ENCODE measurements at regions of chr11 and their contacts with region 1.

Region 1: DNA sequence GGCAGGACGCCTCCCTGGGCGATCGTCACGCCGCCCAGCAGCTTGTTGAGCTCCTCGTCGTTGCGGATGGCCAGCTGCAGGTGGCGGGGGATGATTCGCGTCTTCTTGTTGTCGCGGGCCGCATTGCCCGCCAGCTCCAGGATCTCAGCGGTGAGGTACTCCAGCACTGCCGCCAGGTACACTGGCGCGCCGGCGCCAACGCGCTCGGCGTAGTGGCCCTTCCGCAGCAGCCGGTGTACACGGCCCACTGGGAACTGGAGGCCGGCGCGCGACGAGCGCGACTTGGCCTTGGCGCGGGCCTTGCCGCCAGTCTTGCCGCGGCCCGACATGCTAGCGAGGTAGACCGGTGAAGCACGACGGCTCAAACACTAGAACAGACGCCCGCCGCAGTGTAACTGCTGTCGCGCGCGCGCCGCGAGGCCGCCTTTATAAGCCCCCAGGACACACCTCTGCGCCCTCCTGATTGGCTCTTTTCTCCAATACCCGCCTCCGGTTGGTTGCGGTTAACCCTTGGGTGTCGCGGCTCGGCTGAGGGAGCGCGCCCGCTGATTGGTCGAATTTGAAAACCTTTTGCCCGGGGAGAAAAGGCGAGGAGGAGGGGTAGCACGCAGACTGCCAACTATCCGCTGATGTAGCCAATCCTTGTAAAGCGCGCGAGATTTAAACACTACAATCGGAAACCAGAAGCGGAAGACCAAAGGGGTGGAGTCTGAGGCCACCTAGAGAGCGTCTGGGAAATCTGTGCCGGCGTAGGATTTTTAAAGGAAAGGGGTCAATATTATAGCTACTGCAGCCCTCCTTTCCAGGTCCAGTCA is 6.4 kb downstream of the DPAGT1 start:
- DNase-seq: peak; percentile 96 to 100 (median 100)
- ATAC-seq: peak; percentile 93
- H3K4me3 ChIP-seq: peak overlapping the region; percentile 94
- H3K4me3 Mint-ChIP-seq: peak overlapping the region; percentile 90 to 97 (median 93)
- H3K27ac ChIP-seq: peak overlapping the region; percentile 75
- H3K27ac Mint-ChIP-seq: peak overlapping the region; percentile 82 to 96 (median 88)
- H3K4me1 ChIP-seq: peaks cover 11 to 23% of the 10 kb centered on the region in 2 donors
- H3K4me1 Mint-ChIP-seq: peaks cover 20 to 67% (median 37%) of the 10 kb centered on the region in 7 donors
- H3K27me3 ChIP-seq: no peaks in the 10 kb centered on the region
- H3K27me3 Mint-ChIP-seq: peaks cover 0 to 3% (median 0%) of the 10 kb centered on the region in 5 donors

Region 2: DNA sequence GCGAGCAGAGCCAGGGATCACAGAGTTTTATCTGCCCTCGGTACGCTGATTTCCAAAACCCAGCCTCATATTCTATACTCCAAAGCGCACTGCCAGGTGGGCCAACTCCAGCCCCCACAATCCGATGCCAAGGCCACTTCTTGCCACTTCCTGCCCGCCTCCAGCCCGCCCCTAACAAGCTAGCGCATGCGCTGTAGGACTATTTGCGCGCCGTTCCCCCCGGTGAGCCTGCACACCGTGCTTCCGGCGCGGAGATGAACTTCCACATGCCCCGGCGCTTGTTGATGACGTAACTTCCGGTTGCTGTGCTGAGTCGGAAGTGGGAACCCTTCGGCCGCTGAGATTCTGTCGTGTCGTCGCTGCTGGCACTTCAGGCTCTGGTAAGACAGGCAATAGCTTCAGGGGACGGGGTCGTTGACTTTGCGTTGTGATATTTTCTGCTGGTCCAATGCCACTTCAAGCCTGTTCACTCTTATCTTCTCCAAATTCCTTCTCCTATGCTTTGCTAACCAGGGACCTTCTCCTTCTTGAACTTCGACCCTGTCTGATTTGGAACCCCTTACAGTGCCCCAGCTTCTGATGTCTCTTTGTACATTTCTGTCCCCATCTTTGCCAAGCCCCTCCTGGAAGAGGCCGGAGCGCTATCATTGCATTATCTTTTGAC is 735.8 kb before region 1 on chr11 and contains the start of gene UBE4A:
- CTCF ChIA-PET with region 1: no interaction called
- POLR2A ChIA-PET with region 1: no interaction called
- intact Hi-C with region 1: loop called in 1 of 2 experiments (anchors 2 kb)
- DNase-seq: peak; percentile 89 to 96 (median 95)
- ATAC-seq: peak; percentile 96
- H3K4me3 ChIP-seq: peak within 1 kb of the TSS; percentile 87
- H3K4me3 Mint-ChIP-seq: peak within 1 kb of the TSS; percentile 92 to 99 (median 96)
- H3K27ac ChIP-seq: peak within 1 kb of the TSS; percentile 93
- H3K27ac Mint-ChIP-seq: peak within 1 kb of the TSS; percentile 96 to 100 (median 98)
- H3K4me1 ChIP-seq: peaks cover 18 to 27% of the 10 kb centered on the region in 2 donors
- H3K4me1 Mint-ChIP-seq: peaks cover 30 to 61% (median 51%) of the 10 kb centered on the region in 7 donors
- H3K27me3 ChIP-seq: no peaks in the 10 kb centered on the region
- H3K27me3 Mint-ChIP-seq: peaks cover 0 to 6% (median 0%) of the 10 kb centered on the region in 5 donors
- total RNA-seq, gene UBE4A: 38.4 to 54.5 (median 46.9) TPM

Region 3: DNA sequence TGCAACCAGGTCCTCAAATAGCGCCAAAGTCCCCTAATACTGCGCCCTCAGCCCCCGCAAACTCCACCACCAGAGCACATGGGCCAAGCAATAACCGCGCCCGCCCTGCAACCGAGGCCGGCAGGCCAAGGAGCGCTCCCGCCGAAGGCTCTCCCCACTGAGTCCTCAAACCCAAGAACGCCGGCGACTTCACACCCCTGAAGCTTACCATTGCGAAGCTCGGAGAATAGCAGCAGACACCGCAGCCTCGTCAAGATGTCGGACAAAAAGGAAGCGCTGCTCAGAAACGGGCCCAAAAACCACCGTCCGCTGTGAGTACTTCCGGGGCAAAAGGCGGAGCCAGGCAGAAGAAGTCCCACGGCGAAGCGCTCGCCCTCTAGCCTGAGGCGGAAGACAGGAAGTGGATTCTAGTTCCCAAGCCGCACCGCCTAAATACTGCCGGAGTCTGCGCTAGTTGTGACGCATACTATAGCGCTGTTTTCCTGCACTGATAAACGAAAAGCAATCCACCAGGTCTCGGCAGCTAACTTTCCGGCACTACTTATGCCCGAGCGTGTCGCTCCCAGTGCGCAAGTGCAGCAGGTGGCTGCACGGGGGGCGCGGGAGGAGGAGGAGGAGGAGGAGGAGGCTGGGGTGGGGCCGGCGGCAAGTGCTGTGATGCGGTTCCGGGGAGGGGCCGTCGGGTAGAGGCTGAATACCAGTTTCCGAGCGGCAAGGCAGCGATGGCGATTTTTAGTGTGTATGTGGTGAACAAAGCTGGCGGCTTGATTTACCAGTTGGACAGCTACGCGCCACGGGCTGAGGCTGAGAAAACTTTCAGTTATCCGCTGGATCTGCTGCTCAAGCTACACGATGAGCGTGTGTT is 77.0 kb before region 1 on chr11 and contains the starts of genes RPS25 and TRAPPC4:
- CTCF ChIA-PET with region 1: no interaction called
- POLR2A ChIA-PET with region 1: interaction called, 14 read pairs
- intact Hi-C with region 1: loop called (anchors 1 to 2 kb)
- DNase-seq: peak; percentile 87 to 98 (median 96)
- ATAC-seq: peak; percentile 93
- H3K4me3 ChIP-seq: peak within 1 kb of the TSS; percentile 89
- H3K4me3 Mint-ChIP-seq: peak within 1 kb of the TSS; percentile 96 to 100 (median 98)
- H3K27ac ChIP-seq: peak within 1 kb of the TSS; percentile 98
- H3K27ac Mint-ChIP-seq: peak within 1 kb of the TSS; percentile 99 to 100 (median 100)
- H3K4me1 ChIP-seq: peaks cover 30 to 32% of the 10 kb centered on the region in 2 donors
- H3K4me1 Mint-ChIP-seq: peaks cover 21 to 75% (median 50%) of the 10 kb centered on the region in 7 donors
- H3K27me3 ChIP-seq: no peaks in the 10 kb centered on the region
- H3K27me3 Mint-ChIP-seq: no peaks in the 10 kb centered on the region
- total RNA-seq, gene RPS25: 1,535 to 3,042 (median 2,772) TPM
- total RNA-seq, gene TRAPPC4: 70.7 to 80.3 (median 77.8) TPM

Region 4: DNA sequence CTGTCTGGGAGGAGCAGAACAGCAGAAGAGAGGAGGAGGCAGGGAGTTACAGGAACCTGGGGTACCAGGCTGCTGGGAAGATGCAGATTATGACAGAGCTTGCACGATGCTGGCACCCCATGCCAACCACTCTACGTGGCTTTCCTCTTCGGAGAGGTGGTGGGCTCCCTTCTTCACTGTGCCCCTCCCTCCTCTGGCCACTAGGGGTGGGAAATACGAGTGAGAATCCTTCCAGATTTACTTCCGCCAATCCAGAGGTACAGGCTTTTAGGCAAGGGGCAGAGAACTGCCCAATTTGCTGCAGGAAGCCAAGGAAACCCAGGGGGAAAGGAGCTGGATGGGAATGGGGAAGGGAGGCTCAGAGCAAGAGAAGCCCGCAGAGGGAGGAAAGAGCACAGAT is 50.6 kb before region 1 on chr11:
- CTCF ChIA-PET with region 1: no interaction called
- POLR2A ChIA-PET with region 1: no interaction called
- intact Hi-C with region 1: no loop called
- DNase-seq: no peak
- ATAC-seq: no peak
- H3K4me3 ChIP-seq: no peak overlapping the region
- H3K4me3 Mint-ChIP-seq: no peak overlapping the region
- H3K27ac ChIP-seq: no peak overlapping the region
- H3K27ac Mint-ChIP-seq: peak overlapping the region in 1 of 9 donors; percentile 45
- H3K4me1 ChIP-seq: no peaks in the 10 kb centered on the region
- H3K4me1 Mint-ChIP-seq: peaks cover 0 to 5% (median 0%) of the 10 kb centered on the region in 7 donors
- H3K27me3 ChIP-seq: no peaks in the 10 kb centered on the region
- H3K27me3 Mint-ChIP-seq: no peaks in the 10 kb centered on the region

Region 5: DNA sequence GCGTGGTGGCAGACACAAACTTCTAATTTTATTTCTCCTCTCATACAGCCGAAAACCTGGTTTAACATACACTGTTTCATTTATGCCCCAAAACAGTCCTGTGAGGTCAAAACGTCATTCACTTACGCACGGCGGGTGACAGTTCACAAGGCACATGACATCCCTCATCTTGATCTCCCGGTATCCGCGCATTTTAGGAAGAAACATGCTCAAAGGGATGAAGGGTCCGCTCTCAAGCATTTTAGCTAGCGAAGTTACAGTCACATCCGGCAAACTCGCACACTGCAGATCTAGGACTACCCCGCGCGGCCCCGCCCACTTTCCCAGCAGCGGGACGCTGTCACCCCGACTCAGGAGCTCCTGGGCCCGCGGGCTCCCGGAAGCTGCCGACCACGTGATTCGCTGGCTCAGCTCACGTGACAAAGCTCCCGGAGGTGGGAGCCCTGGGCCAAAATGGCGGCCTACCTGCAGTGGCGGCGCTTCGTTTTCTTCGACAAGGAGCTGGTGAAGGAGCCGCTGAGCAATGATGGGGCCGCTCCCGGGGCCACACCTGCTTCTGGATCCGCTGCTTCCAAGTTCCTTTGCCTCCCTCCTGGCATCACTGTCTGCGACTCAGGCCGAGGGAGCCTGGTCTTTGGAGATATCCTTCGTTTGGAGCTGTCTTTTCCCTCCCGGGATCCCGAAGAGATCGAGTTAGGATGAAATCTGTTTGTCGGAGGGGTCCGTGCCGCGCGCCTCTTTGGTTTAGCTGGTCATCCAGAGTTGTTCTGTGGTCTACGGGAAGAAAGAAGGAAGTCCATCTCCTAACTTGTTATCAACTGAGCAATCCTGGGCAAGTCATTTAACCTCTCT is 27.7 kb before region 1 on chr11 and contains the start of gene VPS11:
- CTCF ChIA-PET with region 1: interaction called, 5 read pairs
- POLR2A ChIA-PET with region 1: interaction called, 39 read pairs
- intact Hi-C with region 1: loop called (anchors 1 kb)
- DNase-seq: peak; percentile 81 to 98 (median 97)
- ATAC-seq: peak; percentile 93
- H3K4me3 ChIP-seq: peak within 1 kb of the TSS; percentile 93
- H3K4me3 Mint-ChIP-seq: peak within 1 kb of the TSS; percentile 90 to 100 (median 95)
- H3K27ac ChIP-seq: peak within 1 kb of the TSS; percentile 96
- H3K27ac Mint-ChIP-seq: peak within 1 kb of the TSS; percentile 92 to 100 (median 97)
- H3K4me1 ChIP-seq: peaks cover 18 to 23% of the 10 kb centered on the region in 2 donors
- H3K4me1 Mint-ChIP-seq: peaks cover 26 to 59% (median 47%) of the 10 kb centered on the region in 7 donors
- H3K27me3 ChIP-seq: no peaks in the 10 kb centered on the region
- H3K27me3 Mint-ChIP-seq: no peaks in the 10 kb centered on the region
- total RNA-seq, gene VPS11: 39.0 to 73.9 (median 57.1) TPM

Region 6: GRCh38 chr11:119144825-119145486 is 49.7 kb after region 1 on chr11:
- CTCF ChIA-PET with region 1: no interaction called
- POLR2A ChIA-PET with region 1: interaction called, 3 read pairs
- intact Hi-C with region 1: loop called (anchors 1 to 2 kb)
- DNase-seq: no peak
- ATAC-seq: peak; percentile 80
- H3K4me3 ChIP-seq: no peak overlapping the region
- H3K4me3 Mint-ChIP-seq: no peak overlapping the region
- H3K27ac ChIP-seq: no peak overlapping the region
- H3K27ac Mint-ChIP-seq: peak overlapping the region in 1 of 9 donors; percentile 59
- H3K4me1 ChIP-seq: peaks cover 0 to 11% of the 10 kb centered on the region in 2 donors
- H3K4me1 Mint-ChIP-seq: peaks cover 5 to 18% (median 13%) of the 10 kb centered on the region in 7 donors
- H3K27me3 ChIP-seq: no peaks in the 10 kb centered on the region
- H3K27me3 Mint-ChIP-seq: peaks cover 31 to 51% (median 36%) of the 10 kb centered on the region in 5 donors

Region 7: GRCh38 chr11:119284344-119285157 is 189.3 kb after region 1 on chr11:
- CTCF ChIA-PET with region 1: no interaction called
- POLR2A ChIA-PET with region 1: interaction called, 3 read pairs
- intact Hi-C with region 1: loop called in 1 of 2 experiments (anchors 1 kb)
- DNase-seq: peak in 7 of 9 donors; percentile 56 to 76 (median 68)
- ATAC-seq: peak; percentile 94
- H3K4me3 ChIP-seq: no peak overlapping the region
- H3K4me3 Mint-ChIP-seq: peak overlapping the region in 2 of 10 donors; percentile 23 to 51
- H3K27ac ChIP-seq: no peak overlapping the region
- H3K27ac Mint-ChIP-seq: peak overlapping the region; percentile 24 to 91 (median 55)
- H3K4me1 ChIP-seq: peaks cover 0 to 6% of the 10 kb centered on the region in 2 donors
- H3K4me1 Mint-ChIP-seq: peaks cover 17 to 56% (median 41%) of the 10 kb centered on the region in 7 donors
- H3K27me3 ChIP-seq: no peaks in the 10 kb centered on the region
- H3K27me3 Mint-ChIP-seq: no peaks in the 10 kb centered on the region

Region 8: DNA sequence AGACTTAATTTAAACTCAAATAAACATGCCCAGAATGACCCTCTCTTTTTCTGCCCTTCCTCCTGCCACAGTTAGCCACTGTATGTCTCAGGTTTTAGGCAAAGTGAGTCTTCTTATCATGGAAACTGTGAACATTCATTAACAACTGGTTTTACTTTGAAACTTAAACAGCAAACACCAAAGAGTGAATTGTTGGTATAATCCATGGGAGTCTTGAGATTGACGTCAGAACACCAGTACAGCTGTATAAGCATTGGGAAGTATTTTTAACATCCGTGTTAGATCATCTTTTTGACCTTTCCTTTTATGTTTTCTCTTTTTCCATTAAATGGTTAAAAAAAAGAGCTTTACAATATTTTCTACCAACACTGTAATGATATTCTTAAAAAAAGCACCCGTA is 1279.8 kb after region 1 on chr11:
- CTCF ChIA-PET with region 1: no interaction called
- POLR2A ChIA-PET with region 1: no interaction called
- intact Hi-C with region 1: no loop called
- DNase-seq: no peak
- ATAC-seq: no peak
- H3K4me3 ChIP-seq: no peak overlapping the region
- H3K4me3 Mint-ChIP-seq: no peak overlapping the region
- H3K27ac ChIP-seq: no peak overlapping the region
- H3K27ac Mint-ChIP-seq: no peak overlapping the region
- H3K4me1 ChIP-seq: no peaks in the 10 kb centered on the region
- H3K4me1 Mint-ChIP-seq: no peaks in the 10 kb centered on the region
- H3K27me3 ChIP-seq: no peaks in the 10 kb centered on the region
- H3K27me3 Mint-ChIP-seq: peaks cover 8 to 35% (median 19%) of the 10 kb centered on the region in 5 donors